Activated naive CD4-positive, alpha-beta T cell treated with anti-CD3 and anti-CD28 coated beads for 36 hours (primary cell): ENCODE measurements at regions of chr4 and their contacts with region 1.

Region 1: GRCh38 chr4:113684534-113685091 is 76.9 kb downstream of the CAMK2D start:
- DNase-seq: peak; percentile 77
- H3K4me3 Mint-ChIP-seq: peak overlapping the region; percentile 23
- H3K27ac Mint-ChIP-seq: peak overlapping the region; percentile 88
- H3K4me1 Mint-ChIP-seq: peaks cover 74% of the 10 kb centered on the region
- H3K27me3 Mint-ChIP-seq: no peaks in the 10 kb centered on the region

Region 2: GRCh38 chr4:112284662-112285411 is 1399.8 kb before region 1 on chr4:
- CTCF ChIA-PET with region 1: no interaction called
- intact Hi-C with region 1: loop called (anchors 5 kb)
- DNase-seq: no peak
- H3K4me3 Mint-ChIP-seq: peak overlapping the region; percentile 97
- H3K27ac Mint-ChIP-seq: peak overlapping the region; percentile 97
- H3K4me1 Mint-ChIP-seq: peaks cover 72% of the 10 kb centered on the region
- H3K27me3 Mint-ChIP-seq: no peaks in the 10 kb centered on the region

Region 3: GRCh38 chr4:113446019-113446418 is 238.6 kb before region 1 on chr4:
- CTCF ChIA-PET with region 1: no interaction called
- intact Hi-C with region 1: loop called (anchors 2 kb)
- DNase-seq: no peak
- H3K4me3 Mint-ChIP-seq: no peak overlapping the region
- H3K27ac Mint-ChIP-seq: peak overlapping the region; percentile 66
- H3K4me1 Mint-ChIP-seq: peaks cover 27% of the 10 kb centered on the region
- H3K27me3 Mint-ChIP-seq: no peaks in the 10 kb centered on the region

Region 4: GRCh38 chr4:113547487-113548042 is 137.0 kb before region 1 on chr4:
- CTCF ChIA-PET with region 1: interaction called, 3 read pairs
- intact Hi-C with region 1: loop called (anchors 1 kb)
- DNase-seq: peak; percentile 97
- H3K4me3 Mint-ChIP-seq: no peak overlapping the region
- H3K27ac Mint-ChIP-seq: peak overlapping the region; percentile 8
- H3K4me1 Mint-ChIP-seq: peaks cover 17% of the 10 kb centered on the region
- H3K27me3 Mint-ChIP-seq: no peaks in the 10 kb centered on the region

Region 5: DNA sequence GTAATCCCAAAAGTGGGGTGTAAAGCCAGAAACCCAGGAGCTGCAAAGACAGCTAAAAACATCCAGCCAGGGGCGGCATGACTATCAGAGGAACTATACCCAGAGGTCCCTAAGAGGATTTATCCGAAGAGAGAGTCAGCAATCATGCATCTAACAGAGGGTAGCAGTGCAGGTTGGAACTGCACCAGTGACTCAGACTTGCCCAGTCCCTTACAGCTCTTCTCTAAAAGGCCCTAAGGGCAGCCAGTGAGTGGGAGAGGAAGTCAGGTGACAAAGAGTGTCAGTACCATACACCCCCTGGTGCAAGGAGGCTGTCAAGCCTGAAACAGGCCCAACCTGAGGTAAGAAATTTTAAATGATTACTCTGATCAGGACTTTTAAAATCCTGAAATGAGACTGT is 11.2 kb before region 1 on chr4:
- CTCF ChIA-PET with region 1: interaction called, 3 read pairs
- intact Hi-C with region 1: loop called (anchors 1 kb)
- DNase-seq: peak; percentile 71
- H3K4me3 Mint-ChIP-seq: no peak overlapping the region
- H3K27ac Mint-ChIP-seq: peak overlapping the region; percentile 71
- H3K4me1 Mint-ChIP-seq: peaks cover 46% of the 10 kb centered on the region
- H3K27me3 Mint-ChIP-seq: no peaks in the 10 kb centered on the region

Region 6: GRCh38 chr4:113823291-113823659 is 138.7 kb after region 1 on chr4:
- CTCF ChIA-PET with region 1: no interaction called
- intact Hi-C with region 1: loop called (anchors 1 kb)
- DNase-seq: no peak
- H3K4me3 Mint-ChIP-seq: no peak overlapping the region
- H3K27ac Mint-ChIP-seq: no peak overlapping the region
- H3K4me1 Mint-ChIP-seq: peaks cover 66% of the 10 kb centered on the region
- H3K27me3 Mint-ChIP-seq: no peaks in the 10 kb centered on the region